ENCODE measurements at regions of chr6 and their contacts with region 1.

Region 1: GRCh38 chr6:166342349-166343149 is at the start of gene SFT2D1:
- DNase-seq: peak; percentile 84
- ATAC-seq: peak; percentile 77
- H3K4me3 Mint-ChIP-seq: peak within 1 kb of the TSS; percentile 92
- H3K27ac Mint-ChIP-seq: peak within 1 kb of the TSS; percentile 89
- H3K4me1 Mint-ChIP-seq: peaks cover 16% of the 10 kb centered on the region
- H3K27me3 Mint-ChIP-seq: no peaks in the 10 kb centered on the region
- CTCF ChIP-seq: no peak
- total RNA-seq, gene SFT2D1: 44.6 and 49.5 TPM in 2 replicates

Region 2: GRCh38 chr6:166286839-166287271 is 55.7 kb before region 1 on chr6:
- CTCF ChIA-PET with region 1: no interaction called
- POLR2A ChIA-PET with region 1: interaction called, 8 read pairs
- intact Hi-C with region 1: loop called (anchors 5 kb)
- DNase-seq: peak; percentile 30
- ATAC-seq: peak; percentile 94
- H3K4me3 Mint-ChIP-seq: peak overlapping the region; percentile 76
- H3K27ac Mint-ChIP-seq: peak overlapping the region; percentile 93
- H3K4me1 Mint-ChIP-seq: peaks cover 20% of the 10 kb centered on the region
- H3K27me3 Mint-ChIP-seq: peaks cover 9% of the 10 kb centered on the region
- CTCF ChIP-seq: no peak

Region 3: GRCh38 chr6:166382933-166383801 is 40.6 kb after region 1 on chr6 and contains the start of gene MPC1:
- CTCF ChIA-PET with region 1: interaction called, 16 read pairs
- POLR2A ChIA-PET with region 1: interaction called, 33 read pairs
- intact Hi-C with region 1: loop called (anchors 1 kb)
- DNase-seq: peak; percentile 96
- ATAC-seq: peak; percentile 94
- H3K4me3 Mint-ChIP-seq: peak within 1 kb of the TSS; percentile 92
- H3K27ac Mint-ChIP-seq: peak within 1 kb of the TSS; percentile 76
- H3K4me1 Mint-ChIP-seq: peaks cover 15% of the 10 kb centered on the region
- H3K27me3 Mint-ChIP-seq: no peaks in the 10 kb centered on the region
- CTCF ChIP-seq: no peak
- total RNA-seq, gene MPC1: 16.7 and 17.3 TPM in 2 replicates

Region 4: GRCh38 chr6:167153521-167153959 is 811.0 kb after region 1 on chr6:
- CTCF ChIA-PET with region 1: no interaction called
- POLR2A ChIA-PET with region 1: no interaction called
- intact Hi-C with region 1: loop called (anchors 10 kb)
- DNase-seq: no peak
- ATAC-seq: peak; percentile 62
- H3K4me3 Mint-ChIP-seq: peak overlapping the region; percentile 88
- H3K27ac Mint-ChIP-seq: peak overlapping the region; percentile 88
- H3K4me1 Mint-ChIP-seq: peaks cover 58% of the 10 kb centered on the region
- H3K27me3 Mint-ChIP-seq: no peaks in the 10 kb centered on the region
- CTCF ChIP-seq: no peak